OCI-LY7 (cell line): ENCODE measurements at regions of chr18 and their contacts with region 1.

Region 1: DNA sequence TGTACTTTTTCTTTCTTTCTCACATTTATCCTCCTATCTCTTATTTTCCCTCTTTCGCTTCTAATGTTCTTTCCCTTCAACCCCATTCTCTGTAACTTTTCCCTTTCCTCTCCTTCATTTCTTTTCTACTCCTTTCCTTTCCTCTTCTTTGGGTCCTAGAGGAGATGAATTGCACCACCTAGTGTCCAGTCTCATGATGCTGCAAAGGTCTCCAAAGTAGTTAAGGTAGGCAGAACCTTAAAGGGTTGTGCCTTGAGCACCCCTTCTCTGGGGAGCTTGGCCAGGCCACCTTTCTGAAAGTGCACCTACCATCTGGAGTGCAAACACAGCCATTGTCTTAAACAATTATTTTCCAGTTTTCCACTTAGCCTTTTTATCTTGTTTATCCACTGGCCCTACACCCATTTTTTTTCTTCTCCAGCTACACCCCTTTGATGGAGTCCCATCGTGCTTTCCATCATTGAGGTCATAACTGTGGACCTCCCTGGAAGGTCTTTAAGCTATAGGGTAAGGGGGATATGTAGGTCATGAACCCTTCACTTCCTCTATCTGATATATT is 156.0 kb downstream of the ESCO1 start:
- DNase-seq: peak; percentile 42
- H3K4me3 ChIP-seq: no peak overlapping the region
- H3K27ac ChIP-seq: no peak overlapping the region
- H3K4me1 ChIP-seq: no peaks in the 10 kb centered on the region
- CTCF ChIP-seq: peak; percentile 88

Region 2: DNA sequence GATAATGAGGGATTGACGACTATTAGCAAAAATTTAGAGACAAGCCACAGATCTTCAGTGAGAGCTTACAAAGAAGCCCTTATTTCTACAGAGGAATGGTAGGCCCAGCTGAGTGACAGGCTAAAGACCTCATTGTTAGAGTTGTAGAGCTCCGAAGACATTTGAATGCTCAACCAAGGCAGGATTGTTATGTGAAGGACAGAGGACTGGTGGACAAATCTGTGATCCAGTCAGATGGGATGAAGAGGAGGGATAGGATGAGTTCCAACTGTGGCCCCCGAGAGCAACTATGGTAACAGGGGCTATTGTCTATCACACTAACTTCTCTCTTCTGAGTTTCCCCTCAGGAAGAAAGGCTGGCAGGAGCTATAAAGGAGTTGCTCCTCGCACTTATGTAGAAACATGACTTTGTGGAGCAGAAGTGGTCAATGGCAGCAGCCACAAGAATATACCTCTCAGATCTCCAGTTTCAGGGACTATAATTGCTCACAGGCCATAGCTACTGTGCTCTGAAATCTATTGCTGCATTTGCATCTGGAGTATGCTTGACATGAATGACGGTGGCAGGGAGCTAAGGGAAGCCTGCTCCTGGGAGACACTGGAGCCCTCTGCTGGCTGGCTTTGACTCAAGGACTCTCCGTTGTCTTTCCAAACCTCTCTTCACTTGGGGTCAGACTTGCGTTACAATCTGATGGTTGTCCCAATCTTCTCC is 252.8 kb before region 1 on chr18:
- CTCF ChIA-PET with region 1: no interaction called
- POLR2A ChIA-PET with region 1: no interaction called
- intact Hi-C with region 1: loop called (anchors 2 kb)
- DNase-seq: peak; percentile 30
- H3K4me3 ChIP-seq: no peak overlapping the region
- H3K27ac ChIP-seq: no peak overlapping the region
- H3K4me1 ChIP-seq: no peaks in the 10 kb centered on the region
- CTCF ChIP-seq: peak; percentile 77